Panc1 (cell line): ENCODE measurements at regions of chr3 and their contacts with region 1.

Region 1: DNA sequence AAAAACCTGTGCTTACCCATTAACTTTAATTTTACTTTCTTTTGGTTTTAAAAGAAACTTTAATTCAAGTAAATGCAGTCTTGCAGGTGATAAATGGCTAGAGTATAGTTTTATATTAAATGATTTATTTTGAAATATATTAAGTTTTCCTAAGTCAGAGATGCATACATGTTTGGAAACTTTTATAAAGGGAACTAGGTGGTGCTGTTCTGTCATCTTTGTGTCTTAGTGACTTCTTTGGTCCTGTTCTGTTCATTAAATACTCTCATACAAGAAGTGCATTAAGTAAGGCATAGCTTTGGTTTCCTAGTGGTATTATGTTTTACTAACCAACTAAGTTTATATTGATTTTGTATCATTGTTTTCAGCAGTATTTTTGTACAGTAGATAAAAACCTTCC is 15.6 kb downstream of the CADM2 start:
- DNase-seq: no peak
- ATAC-seq: no peak
- H3K4me3 ChIP-seq: no peak overlapping the region
- H3K27ac ChIP-seq: no peak overlapping the region
- H3K4me1 ChIP-seq: no peaks in the 10 kb centered on the region
- H3K27me3 ChIP-seq: no peaks in the 10 kb centered on the region
- CTCF ChIP-seq: no peak

Region 2: GRCh38 chr3:84683493-84683892 is 290.9 kb before region 1 on chr3:
- CTCF ChIA-PET with region 1: no interaction called
- POLR2A ChIA-PET with region 1: no interaction called
- in situ Hi-C with region 1: no loop called
- intact Hi-C with region 1: no loop called
- DNase-seq: no peak
- ATAC-seq: no peak
- H3K4me3 ChIP-seq: no peak overlapping the region
- H3K27ac ChIP-seq: no peak overlapping the region
- H3K4me1 ChIP-seq: no peaks in the 10 kb centered on the region
- H3K27me3 ChIP-seq: no peaks in the 10 kb centered on the region
- CTCF ChIP-seq: no peak

Region 3: DNA sequence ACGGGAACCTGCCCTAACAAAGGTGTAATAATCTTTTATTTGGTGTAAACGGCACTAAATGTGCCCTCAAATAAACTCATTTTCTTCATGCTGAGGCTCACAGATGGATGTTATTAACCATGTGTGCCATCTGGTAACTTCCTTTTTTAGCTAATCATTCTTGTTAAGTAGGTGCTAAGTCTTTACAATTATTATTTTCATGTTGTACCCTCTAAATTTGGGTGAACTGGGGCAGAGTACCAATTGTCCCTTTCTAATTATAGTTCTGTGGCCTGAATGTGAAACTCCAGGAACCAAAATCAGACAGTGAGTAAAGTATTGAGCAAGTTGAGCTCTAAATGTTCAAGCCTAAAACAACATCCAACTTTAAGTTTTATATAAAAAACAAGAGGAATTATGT is 236.3 kb before region 1 on chr3:
- CTCF ChIA-PET with region 1: no interaction called
- POLR2A ChIA-PET with region 1: no interaction called
- in situ Hi-C with region 1: no loop called
- intact Hi-C with region 1: no loop called
- DNase-seq: no peak
- ATAC-seq: no peak
- H3K4me3 ChIP-seq: no peak overlapping the region
- H3K27ac ChIP-seq: no peak overlapping the region
- H3K4me1 ChIP-seq: no peaks in the 10 kb centered on the region
- H3K27me3 ChIP-seq: no peaks in the 10 kb centered on the region
- CTCF ChIP-seq: no peak

Region 4: DNA sequence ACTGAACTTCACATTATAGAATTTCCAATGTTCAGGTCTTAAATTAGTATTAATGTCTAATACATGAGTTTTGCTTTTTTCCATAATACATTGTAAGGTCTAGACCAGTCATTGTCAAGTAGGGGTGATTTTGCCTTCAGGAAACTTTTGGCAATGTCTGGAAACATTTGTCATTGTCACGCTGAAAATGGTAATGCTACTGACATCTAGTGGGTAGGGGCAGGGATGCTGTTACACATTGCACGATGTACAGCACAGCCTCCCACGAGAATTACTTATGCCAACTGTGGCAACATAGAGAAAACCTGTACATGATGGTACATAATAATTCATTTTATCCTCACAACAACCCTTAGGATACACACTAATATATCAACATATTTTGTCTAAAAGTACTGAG is 368.6 kb after region 1 on chr3:
- CTCF ChIA-PET with region 1: no interaction called
- POLR2A ChIA-PET with region 1: no interaction called
- in situ Hi-C with region 1: no loop called
- intact Hi-C with region 1: loop called (anchors 10 kb)
- DNase-seq: peak; percentile 24
- ATAC-seq: peak; percentile 75
- H3K4me3 ChIP-seq: no peak overlapping the region
- H3K27ac ChIP-seq: no peak overlapping the region
- H3K4me1 ChIP-seq: no peaks in the 10 kb centered on the region
- H3K27me3 ChIP-seq: no peaks in the 10 kb centered on the region
- CTCF ChIP-seq: peak; percentile 55